HCT116 (cell line): ENCODE measurements at regions of chrX and their contacts with region 1.

Region 1: GRCh38 chrX:22135994-22136684 is 104.0 kb downstream of the PHEX start:
- DNase-seq: peak; percentile 16
- ATAC-seq: peak; percentile 36; the same call in 1 of the 2 replicates
- H3K4me3 ChIP-seq: no peak overlapping the region
- H3K27ac ChIP-seq: peak overlapping the region; percentile 39; the same call in 1 of the 2 replicates
- H3K4me1 ChIP-seq: peaks cover 0 to 18% of the 10 kb centered on the region in 2 experiments; a peak in 2 of 4 replicates
- H3K27me3 ChIP-seq: no peaks in the 10 kb centered on the region
- CTCF ChIP-seq: peak; percentile 34 to 59 (median 40); a peak in 4 of 6 replicates
- POLR2A ChIP-seq: no peak
- RAD21 ChIP-seq: peak; percentile 63

Region 2: DNA sequence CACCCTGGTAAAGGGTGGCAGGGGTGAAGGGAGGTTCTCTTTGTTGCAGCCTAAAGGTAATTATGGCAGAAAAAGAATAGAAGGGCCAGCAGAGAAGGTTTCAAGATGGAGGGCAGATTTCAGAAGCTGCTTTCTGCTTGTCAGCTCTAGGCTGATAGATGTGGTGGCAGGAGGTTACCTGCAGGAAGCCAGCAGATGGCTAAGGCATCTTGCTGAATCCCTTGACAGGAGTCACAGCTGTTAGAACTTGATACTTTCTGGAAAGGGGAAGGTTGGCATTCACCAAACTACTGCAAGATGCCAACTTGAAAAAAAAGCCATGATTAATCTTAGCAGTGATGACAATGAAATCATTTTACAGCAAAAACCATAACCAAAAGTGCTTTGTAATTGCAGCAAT is 67.0 kb after region 1 on chrX:
- CTCF ChIA-PET with region 1: no interaction called
- POLR2A ChIA-PET with region 1: no interaction called
- RAD21 ChIA-PET with region 1: no interaction called
- intact Hi-C with region 1: no loop called
- DNase-seq: no peak
- ATAC-seq: no peak
- H3K4me3 ChIP-seq: no peak overlapping the region
- H3K27ac ChIP-seq: no peak overlapping the region
- H3K4me1 ChIP-seq: no peaks in the 10 kb centered on the region
- H3K27me3 ChIP-seq: no peaks in the 10 kb centered on the region
- CTCF ChIP-seq: no peak
- POLR2A ChIP-seq: no peak
- RAD21 ChIP-seq: no peak

Region 3: GRCh38 chrX:22433292-22434070 is 297.3 kb after region 1 on chrX:
- CTCF ChIA-PET with region 1: no interaction called
- POLR2A ChIA-PET with region 1: no interaction called
- RAD21 ChIA-PET with region 1: no interaction called
- intact Hi-C with region 1: no loop called
- DNase-seq: no peak
- ATAC-seq: no peak
- H3K4me3 ChIP-seq: no peak overlapping the region
- H3K27ac ChIP-seq: no peak overlapping the region
- H3K4me1 ChIP-seq: no peaks in the 10 kb centered on the region
- H3K27me3 ChIP-seq: no peaks in the 10 kb centered on the region
- CTCF ChIP-seq: no peak
- POLR2A ChIP-seq: no peak
- RAD21 ChIP-seq: no peak

Region 4: GRCh38 chrX:22534643-22535042 is 398.5 kb after region 1 on chrX:
- CTCF ChIA-PET with region 1: no interaction called
- POLR2A ChIA-PET with region 1: no interaction called
- RAD21 ChIA-PET with region 1: no interaction called
- intact Hi-C with region 1: loop called (anchors 5 kb)
- DNase-seq: no peak
- ATAC-seq: no peak
- H3K4me3 ChIP-seq: no peak overlapping the region
- H3K27ac ChIP-seq: no peak overlapping the region
- H3K4me1 ChIP-seq: no peaks in the 10 kb centered on the region
- H3K27me3 ChIP-seq: peaks cover 10% of the 10 kb centered on the region; the same call in 1 of the 2 replicates
- CTCF ChIP-seq: no peak
- POLR2A ChIP-seq: no peak
- RAD21 ChIP-seq: no peak

Region 5: DNA sequence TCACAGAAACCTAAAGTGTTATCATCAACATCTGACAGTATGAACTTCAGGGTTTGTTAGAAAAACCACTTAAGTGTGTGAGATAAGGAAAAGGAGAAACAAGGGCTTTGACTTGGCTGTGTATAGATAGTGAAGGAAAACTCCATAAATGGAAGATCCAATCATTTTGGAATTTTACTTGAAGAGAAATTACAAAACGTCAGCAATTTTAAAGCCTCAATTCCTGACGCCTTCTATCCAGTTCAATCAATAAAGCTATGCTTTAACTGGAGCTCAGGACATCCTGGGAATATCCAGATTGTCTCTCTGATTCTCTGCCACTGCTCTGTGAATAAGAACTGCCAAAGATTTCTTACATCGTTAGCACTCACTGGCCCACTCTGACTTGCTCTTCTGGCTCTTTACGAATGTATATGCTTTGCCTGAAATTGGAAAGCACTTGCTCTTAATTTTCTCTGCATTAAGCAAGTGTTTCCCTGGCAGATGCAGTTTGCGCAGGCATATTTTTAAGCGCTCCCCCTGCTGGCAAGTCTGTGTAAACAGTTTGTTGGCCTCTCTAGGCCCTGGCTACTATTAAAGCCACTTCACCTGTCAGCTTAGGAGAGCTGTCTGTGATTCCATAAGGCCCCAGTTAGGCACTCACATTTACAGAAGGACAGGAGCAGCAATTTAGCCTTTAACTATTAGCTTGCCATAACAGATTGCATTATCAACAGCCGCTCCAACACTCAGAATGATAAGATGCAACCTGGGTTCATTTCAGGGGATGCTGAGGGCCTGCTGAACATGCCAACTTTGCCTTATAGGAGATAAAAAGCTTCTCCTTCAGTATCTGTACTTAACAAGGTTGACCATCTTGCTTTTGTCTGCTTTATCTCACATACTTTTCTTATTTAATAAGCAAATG is 612.2 kb after region 1 on chrX:
- CTCF ChIA-PET with region 1: interaction called, 9 read pairs
- POLR2A ChIA-PET with region 1: no interaction called
- RAD21 ChIA-PET with region 1: no interaction called
- intact Hi-C with region 1: loop called (anchors 5 kb)
- DNase-seq: peak; percentile 19
- ATAC-seq: peak; percentile 82
- H3K4me3 ChIP-seq: no peak overlapping the region
- H3K27ac ChIP-seq: no peak overlapping the region
- H3K4me1 ChIP-seq: no peaks in the 10 kb centered on the region
- H3K27me3 ChIP-seq: no peaks in the 10 kb centered on the region
- CTCF ChIP-seq: peak; percentile 31 to 61 (median 49); a peak in 5 of 6 replicates
- POLR2A ChIP-seq: no peak
- RAD21 ChIP-seq: peak; percentile 60

Region 6: DNA sequence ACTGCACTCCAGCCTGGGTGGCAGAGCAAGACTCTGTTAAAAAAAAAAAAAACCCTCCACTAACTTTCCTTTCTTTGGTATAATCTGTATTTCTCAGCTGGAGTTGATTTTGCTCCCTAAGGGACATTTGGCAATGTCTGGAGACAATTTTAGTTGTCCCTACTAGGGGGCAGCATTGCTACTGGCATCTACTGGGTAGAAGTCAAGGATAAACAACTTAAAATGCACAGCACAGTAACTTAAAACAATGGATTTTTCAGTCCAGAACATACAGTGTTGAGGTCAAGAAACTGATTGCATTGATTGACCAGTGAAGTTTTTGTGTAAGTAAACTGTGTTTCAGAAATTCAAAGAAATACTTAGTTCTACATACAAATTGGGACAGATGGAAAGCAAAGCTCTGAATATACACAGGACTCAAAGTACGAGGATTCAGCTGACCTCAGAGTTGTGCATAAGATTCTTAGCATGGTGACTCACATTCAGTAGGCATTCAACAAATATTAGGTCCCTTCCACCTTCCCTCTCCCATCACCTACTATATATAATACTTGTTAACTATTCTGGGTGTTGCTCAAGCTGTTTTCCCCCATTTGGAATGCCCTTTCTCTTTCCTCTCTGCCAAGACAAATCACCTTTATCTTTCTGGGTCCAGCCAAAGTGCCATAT is 872.4 kb after region 1 on chrX:
- CTCF ChIA-PET with region 1: interaction called, 4 read pairs
- POLR2A ChIA-PET with region 1: no interaction called
- RAD21 ChIA-PET with region 1: no interaction called
- intact Hi-C with region 1: loop called (anchors 10 kb)
- DNase-seq: peak; percentile 6
- ATAC-seq: peak; percentile 58
- H3K4me3 ChIP-seq: no peak overlapping the region
- H3K27ac ChIP-seq: no peak overlapping the region
- H3K4me1 ChIP-seq: no peaks in the 10 kb centered on the region
- H3K27me3 ChIP-seq: no peaks in the 10 kb centered on the region
- CTCF ChIP-seq: peak; percentile 19 to 52 (median 52); a peak in 4 of 6 replicates
- POLR2A ChIP-seq: no peak
- RAD21 ChIP-seq: peak; percentile 57; the same call in 1 of the 2 replicates

Region 7: GRCh38 chrX:23554304-23554703 is 1418.2 kb after region 1 on chrX:
- CTCF ChIA-PET with region 1: no interaction called
- POLR2A ChIA-PET with region 1: no interaction called
- RAD21 ChIA-PET with region 1: no interaction called
- intact Hi-C with region 1: loop called (anchors 5 kb)
- DNase-seq: peak; percentile 22
- ATAC-seq: peak; percentile 53; the same call in 1 of the 2 replicates
- H3K4me3 ChIP-seq: no peak overlapping the region
- H3K27ac ChIP-seq: no peak overlapping the region
- H3K4me1 ChIP-seq: no peaks in the 10 kb centered on the region
- H3K27me3 ChIP-seq: peaks cover 7% of the 10 kb centered on the region
- CTCF ChIP-seq: peak; percentile 30 to 58 (median 33); a peak in 5 of 6 replicates
- POLR2A ChIP-seq: no peak
- RAD21 ChIP-seq: peak; percentile 69